AG04450 (cell line): ENCODE measurements at regions of chr21 and their contacts with region 1.

Region 1: GRCh38 chr21:17585875-17586450 is 26.7 kb downstream of the BTG3 start:
- DNase-seq: no peak
- H3K4me3 ChIP-seq: no peak overlapping the region
- H3K27ac ChIP-seq: no peak overlapping the region
- H3K27me3 ChIP-seq: no peaks in the 10 kb centered on the region
- CTCF ChIP-seq: peak; percentile 63

Region 2: DNA sequence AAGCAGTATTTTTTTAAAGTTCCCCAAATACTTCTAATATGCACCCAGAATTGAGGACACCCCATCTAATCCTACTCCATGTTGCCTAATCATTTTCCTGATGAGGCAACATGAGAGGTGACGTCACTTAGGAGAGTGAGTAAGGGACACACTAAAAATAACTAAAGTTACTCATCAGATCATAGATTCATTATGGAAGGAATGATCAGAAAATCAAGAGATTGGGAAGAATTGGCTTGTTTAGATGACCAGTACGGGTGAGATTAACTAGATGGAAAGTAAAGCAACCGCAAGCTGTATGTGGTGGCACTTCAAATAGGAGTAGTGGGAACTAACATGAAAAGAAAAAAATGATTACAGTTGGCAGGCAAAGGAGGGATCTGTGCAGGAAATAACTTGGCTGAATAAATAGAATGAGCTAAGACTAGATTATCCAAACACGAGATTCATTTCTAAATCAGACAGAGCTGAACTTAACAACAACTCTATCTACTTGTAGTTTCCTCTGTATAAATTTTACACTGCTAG is 134.5 kb before region 1 on chr21:
- CTCF ChIA-PET with region 1: interaction called, 15 read pairs
- POLR2A ChIA-PET with region 1: no interaction called
- DNase-seq: peak; percentile 50
- H3K4me3 ChIP-seq: no peak overlapping the region
- H3K27ac ChIP-seq: peak overlapping the region; percentile 43
- H3K27me3 ChIP-seq: no peaks in the 10 kb centered on the region
- CTCF ChIP-seq: no peak

Region 3: DNA sequence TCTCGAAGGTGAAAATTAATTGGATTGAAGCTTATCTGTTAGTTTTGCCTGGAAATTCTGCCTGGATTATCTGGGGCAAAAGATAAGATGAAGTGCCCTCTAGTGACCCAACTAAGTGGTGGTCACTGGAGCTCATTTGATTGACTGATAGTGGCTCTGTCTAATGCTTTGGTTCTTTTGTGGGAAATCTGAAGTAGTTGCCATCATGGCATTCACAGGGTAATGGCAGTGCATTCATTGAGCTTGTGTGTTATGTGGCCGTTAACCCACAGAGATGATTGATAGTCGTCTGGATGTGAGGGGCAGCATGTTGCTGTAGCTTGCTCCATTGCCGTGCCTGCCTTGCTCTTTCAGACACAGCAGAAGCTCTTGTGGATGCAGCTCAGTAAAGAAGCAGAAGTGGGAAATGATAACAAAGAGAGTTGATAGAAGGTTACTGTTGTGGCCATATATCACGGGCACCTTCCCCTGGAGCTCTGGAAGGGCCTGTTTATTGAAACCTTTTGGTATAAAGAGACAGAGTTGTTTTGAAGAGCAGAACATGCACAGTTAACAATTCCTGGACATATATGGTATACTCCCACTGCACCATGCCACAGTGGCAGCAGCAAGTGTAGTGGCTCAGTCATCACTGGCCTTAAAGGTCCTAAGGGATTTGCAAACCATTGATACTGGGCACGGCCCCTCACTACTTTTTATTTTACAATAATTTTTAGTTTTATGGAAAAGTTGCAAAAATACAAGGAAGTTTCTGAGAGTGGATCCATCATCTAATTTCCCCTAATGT is 31.1 kb before region 1 on chr21:
- CTCF ChIA-PET with region 1: interaction called, 10 read pairs
- POLR2A ChIA-PET with region 1: no interaction called
- DNase-seq: no peak
- H3K4me3 ChIP-seq: no peak overlapping the region
- H3K27ac ChIP-seq: no peak overlapping the region
- H3K27me3 ChIP-seq: peaks cover 2% of the 10 kb centered on the region
- CTCF ChIP-seq: peak; percentile 46